Activated CD4-positive, alpha-beta memory T cell treated with anti-CD3 and anti-CD28 coated beads for 36 hours (primary cell): ENCODE measurements at regions of chr9 and their contacts with region 1.

Region 1: DNA sequence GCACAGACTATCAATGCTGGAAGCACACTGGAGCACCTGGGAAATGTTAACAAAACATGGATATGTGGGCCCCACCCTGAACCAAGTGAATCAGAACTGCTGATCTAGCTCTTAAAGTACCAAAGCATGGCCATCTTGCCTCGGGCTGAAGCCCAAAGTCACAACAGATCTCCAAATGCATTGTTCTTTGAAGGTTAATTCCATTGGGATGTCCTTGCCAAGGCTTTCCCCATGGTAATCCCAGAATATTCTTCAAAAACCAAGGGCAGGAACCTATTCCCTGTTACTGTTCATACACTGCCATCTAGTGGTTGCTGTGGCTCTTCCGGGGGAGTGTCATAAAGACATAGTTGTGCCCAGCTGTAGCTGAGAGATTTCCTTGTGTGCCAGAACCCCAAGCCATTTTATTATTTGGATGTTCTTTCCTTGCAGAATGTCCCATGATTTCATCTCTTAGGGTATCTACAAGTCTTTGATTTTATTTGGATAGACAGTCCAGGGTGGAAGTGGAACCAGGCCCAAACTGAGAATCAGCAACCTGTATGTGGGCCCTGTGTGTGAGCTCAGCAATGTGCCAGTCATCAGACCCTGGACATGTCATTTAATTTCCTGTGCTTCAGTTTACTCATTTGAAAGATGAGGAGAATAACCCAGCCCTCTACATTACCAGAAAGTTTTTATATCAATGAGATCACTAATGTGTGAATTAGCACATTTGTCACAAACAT is 290.0 kb downstream of the ACTL7B start:
- DNase-seq: no peak
- H3K4me3 Mint-ChIP-seq: no peak overlapping the region
- H3K27ac Mint-ChIP-seq: no peak overlapping the region
- H3K4me1 Mint-ChIP-seq: no peaks in the 10 kb centered on the region
- H3K27me3 Mint-ChIP-seq: no peaks in the 10 kb centered on the region

Region 2: GRCh38 chr9:107465467-107466451 is 1100.1 kb before region 1 on chr9:
- CTCF ChIA-PET with region 1: interaction called, 6 read pairs
- POLR2A ChIA-PET with region 1: no interaction called
- intact Hi-C with region 1: loop called (anchors 5 kb)
- DNase-seq: peak; percentile 45
- H3K4me3 Mint-ChIP-seq: no peak overlapping the region
- H3K27ac Mint-ChIP-seq: no peak overlapping the region
- H3K4me1 Mint-ChIP-seq: peaks cover 4% of the 10 kb centered on the region
- H3K27me3 Mint-ChIP-seq: peaks cover 35% of the 10 kb centered on the region

Region 3: GRCh38 chr9:108478431-108478837 is 87.4 kb before region 1 on chr9:
- CTCF ChIA-PET with region 1: no interaction called
- POLR2A ChIA-PET with region 1: no interaction called
- intact Hi-C with region 1: loop called (anchors 10 kb)
- DNase-seq: peak; percentile 10
- H3K4me3 Mint-ChIP-seq: no peak overlapping the region
- H3K27ac Mint-ChIP-seq: no peak overlapping the region
- H3K4me1 Mint-ChIP-seq: no peaks in the 10 kb centered on the region
- H3K27me3 Mint-ChIP-seq: no peaks in the 10 kb centered on the region

Region 4: GRCh38 chr9:108761655-108762347 is 196.0 kb after region 1 on chr9:
- CTCF ChIA-PET with region 1: interaction called, 3 read pairs
- POLR2A ChIA-PET with region 1: no interaction called
- intact Hi-C with region 1: loop called (anchors 5 kb)
- DNase-seq: peak; percentile 34
- H3K4me3 Mint-ChIP-seq: no peak overlapping the region
- H3K27ac Mint-ChIP-seq: no peak overlapping the region
- H3K4me1 Mint-ChIP-seq: no peaks in the 10 kb centered on the region
- H3K27me3 Mint-ChIP-seq: no peaks in the 10 kb centered on the region

Region 5: GRCh38 chr9:108913391-108913790 is 347.6 kb after region 1 on chr9:
- CTCF ChIA-PET with region 1: no interaction called
- POLR2A ChIA-PET with region 1: no interaction called
- intact Hi-C with region 1: no loop called
- DNase-seq: no peak
- H3K4me3 Mint-ChIP-seq: no peak overlapping the region
- H3K27ac Mint-ChIP-seq: no peak overlapping the region
- H3K4me1 Mint-ChIP-seq: peaks cover 16% of the 10 kb centered on the region
- H3K27me3 Mint-ChIP-seq: no peaks in the 10 kb centered on the region